B cell (primary cell): ENCODE measurements at regions of chr5 and their contacts with region 1.

Region 1: DNA sequence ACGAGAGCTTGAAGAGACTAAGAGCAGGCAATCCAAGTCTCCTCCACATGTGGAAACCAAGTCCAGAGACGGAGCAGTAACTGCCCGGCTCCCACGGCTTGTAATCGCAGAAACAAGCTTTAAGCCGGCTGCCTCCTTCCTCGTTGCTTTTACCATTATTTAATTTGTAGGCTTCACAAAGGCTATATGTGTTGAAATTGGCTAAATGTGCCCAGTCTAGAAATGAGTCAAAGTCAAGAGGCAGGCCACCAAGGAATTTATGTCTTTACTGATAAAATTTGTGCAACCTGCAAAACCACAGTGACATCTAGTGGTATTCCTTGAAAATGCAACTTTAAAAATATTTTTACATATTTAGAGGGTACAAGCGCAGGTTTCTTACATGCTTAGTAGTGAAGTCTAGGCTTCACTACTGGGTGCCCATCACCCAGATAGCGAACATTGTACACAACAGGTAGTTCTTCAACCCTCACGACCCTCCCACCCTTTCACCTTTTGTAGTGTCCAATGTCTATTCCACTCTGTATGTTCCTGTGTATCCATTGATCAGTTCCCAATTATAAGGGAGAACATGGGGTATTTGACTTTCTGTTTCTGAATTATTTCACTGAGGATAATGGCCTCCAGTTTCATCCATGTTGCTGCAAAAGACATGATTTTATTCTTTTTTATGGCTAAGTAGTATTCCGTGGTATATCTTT is 33.5 kb upstream of the EBF1 start:
- DNase-seq: peak; percentile 71
- ATAC-seq: peak; percentile 58
- H3K4me3 ChIP-seq: no peak overlapping the region
- H3K4me3 Mint-ChIP-seq: no peak overlapping the region
- H3K27ac ChIP-seq: no peak overlapping the region
- H3K27ac Mint-ChIP-seq: no peak overlapping the region
- H3K4me1 ChIP-seq: no peaks in the 10 kb centered on the region
- H3K4me1 Mint-ChIP-seq: no peaks in the 10 kb centered on the region
- H3K27me3 ChIP-seq: no peaks in the 10 kb centered on the region
- H3K27me3 Mint-ChIP-seq: peaks cover 13% of the 10 kb centered on the region
- CTCF ChIP-seq: peak; percentile 91

Region 2: DNA sequence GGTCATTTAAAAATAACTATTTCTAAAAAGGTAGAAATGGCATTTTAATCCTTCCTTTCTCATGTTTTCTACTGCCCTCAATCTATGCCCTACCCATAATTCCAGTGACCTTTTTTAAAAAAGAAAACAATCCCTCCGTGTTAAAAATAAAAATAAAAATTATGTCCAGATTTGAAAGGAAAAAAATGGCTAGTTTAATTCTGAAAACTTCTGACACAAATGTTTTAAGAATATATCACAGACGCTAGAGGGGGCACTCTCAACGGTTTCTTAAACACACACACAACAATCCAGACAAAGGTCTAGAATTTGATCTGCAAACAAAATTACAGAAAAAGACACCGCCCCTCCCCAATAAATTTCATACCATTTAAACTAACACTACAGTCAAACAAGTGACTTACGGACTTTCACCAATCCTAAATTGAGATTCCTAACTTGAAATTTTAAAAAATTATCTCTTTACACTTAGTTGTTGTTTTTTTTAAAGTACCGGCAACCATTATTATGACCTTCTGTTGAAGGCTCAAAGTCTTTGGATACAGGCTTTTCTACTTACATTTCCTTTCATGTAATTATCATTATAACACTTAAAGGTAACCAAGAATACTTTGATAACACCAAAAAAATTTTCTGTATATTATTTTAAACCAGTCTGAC is 1312.5 kb before region 1 on chr5:
- CTCF ChIA-PET with region 1: interaction called, 22 read pairs
- POLR2A ChIA-PET with region 1: no interaction called
- intact Hi-C with region 1: loop called (anchors 1 kb)
- DNase-seq: peak; percentile 53
- ATAC-seq: no peak
- H3K4me3 ChIP-seq: no peak overlapping the region
- H3K4me3 Mint-ChIP-seq: no peak overlapping the region
- H3K27ac ChIP-seq: peak overlapping the region in 1 of 2 donors; percentile 39
- H3K27ac Mint-ChIP-seq: peak overlapping the region; percentile 2
- H3K4me1 ChIP-seq: no peaks in the 10 kb centered on the region
- H3K4me1 Mint-ChIP-seq: peaks cover 24% of the 10 kb centered on the region
- H3K27me3 ChIP-seq: no peaks in the 10 kb centered on the region
- H3K27me3 Mint-ChIP-seq: no peaks in the 10 kb centered on the region
- CTCF ChIP-seq: peak; percentile 72

Region 3: GRCh38 chr5:157994906-157995519 is 1138.2 kb before region 1 on chr5:
- CTCF ChIA-PET with region 1: interaction called, 6 read pairs
- POLR2A ChIA-PET with region 1: no interaction called
- intact Hi-C with region 1: loop called (anchors 5 kb)
- DNase-seq: peak; percentile 57
- ATAC-seq: peak; percentile 69
- H3K4me3 ChIP-seq: no peak overlapping the region
- H3K4me3 Mint-ChIP-seq: no peak overlapping the region
- H3K27ac ChIP-seq: no peak overlapping the region
- H3K27ac Mint-ChIP-seq: no peak overlapping the region
- H3K4me1 ChIP-seq: peaks cover 0 to 3% of the 10 kb centered on the region in 2 donors
- H3K4me1 Mint-ChIP-seq: peaks cover 2% of the 10 kb centered on the region
- H3K27me3 ChIP-seq: peaks cover 0 to 4% (median 0%) of the 10 kb centered on the region in 4 experiments
- H3K27me3 Mint-ChIP-seq: peaks cover 5% of the 10 kb centered on the region
- CTCF ChIP-seq: peak; percentile 72

Region 4: GRCh38 chr5:158074992-158075769 is 1058.0 kb before region 1 on chr5:
- CTCF ChIA-PET with region 1: interaction called, 60 read pairs
- POLR2A ChIA-PET with region 1: no interaction called
- intact Hi-C with region 1: loop called (anchors 1 kb)
- DNase-seq: peak; percentile 78
- ATAC-seq: peak; percentile 90
- H3K4me3 ChIP-seq: peak overlapping the region in 2 of 5 experiments; percentile 10 to 20
- H3K4me3 Mint-ChIP-seq: peak overlapping the region; percentile 12
- H3K27ac ChIP-seq: no peak overlapping the region
- H3K27ac Mint-ChIP-seq: peak overlapping the region; percentile 43
- H3K4me1 ChIP-seq: peaks cover 12 to 20% of the 10 kb centered on the region in 2 donors
- H3K4me1 Mint-ChIP-seq: peaks cover 21% of the 10 kb centered on the region
- H3K27me3 ChIP-seq: peaks cover 0 to 3% (median 0%) of the 10 kb centered on the region in 4 experiments
- H3K27me3 Mint-ChIP-seq: no peaks in the 10 kb centered on the region
- CTCF ChIP-seq: peak; percentile 82

Region 5: GRCh38 chr5:158165638-158166037 is 967.6 kb before region 1 on chr5:
- CTCF ChIA-PET with region 1: interaction called, 15 read pairs
- POLR2A ChIA-PET with region 1: no interaction called
- intact Hi-C with region 1: no loop called
- DNase-seq: no peak
- ATAC-seq: no peak
- H3K4me3 ChIP-seq: no peak overlapping the region
- H3K4me3 Mint-ChIP-seq: no peak overlapping the region
- H3K27ac ChIP-seq: no peak overlapping the region
- H3K27ac Mint-ChIP-seq: no peak overlapping the region
- H3K4me1 ChIP-seq: peaks cover 9 to 10% of the 10 kb centered on the region in 2 donors
- H3K4me1 Mint-ChIP-seq: peaks cover 9% of the 10 kb centered on the region
- H3K27me3 ChIP-seq: peaks cover 0 to 3% (median 0%) of the 10 kb centered on the region in 4 experiments
- H3K27me3 Mint-ChIP-seq: peaks cover 14% of the 10 kb centered on the region
- CTCF ChIP-seq: no peak

Region 6: DNA sequence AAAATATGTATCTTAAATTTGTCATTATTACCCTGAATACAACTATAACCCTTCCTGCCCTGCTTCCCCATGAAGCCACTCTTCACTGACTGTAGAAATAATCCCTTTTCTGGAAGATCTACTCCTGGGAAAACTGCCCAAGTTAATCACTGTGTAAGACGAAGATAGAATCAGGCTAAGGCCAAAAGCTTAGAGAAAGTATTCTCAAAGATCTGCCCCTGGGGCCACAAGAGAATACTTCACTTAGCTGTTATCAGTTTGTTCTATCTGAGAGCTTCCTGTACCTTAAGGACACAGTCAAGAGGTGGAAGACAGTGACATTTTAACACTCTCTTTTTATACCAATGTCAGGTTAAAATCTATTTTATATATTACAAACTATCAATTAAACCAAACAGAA is 42.4 kb after region 1 on chr5:
- CTCF ChIA-PET with region 1: no interaction called
- POLR2A ChIA-PET with region 1: no interaction called
- intact Hi-C with region 1: no loop called
- DNase-seq: no peak
- ATAC-seq: no peak
- H3K4me3 ChIP-seq: no peak overlapping the region
- H3K4me3 Mint-ChIP-seq: no peak overlapping the region
- H3K27ac ChIP-seq: no peak overlapping the region
- H3K27ac Mint-ChIP-seq: no peak overlapping the region
- H3K4me1 ChIP-seq: peaks cover 7 to 28% of the 10 kb centered on the region in 2 donors
- H3K4me1 Mint-ChIP-seq: peaks cover 29% of the 10 kb centered on the region
- H3K27me3 ChIP-seq: no peaks in the 10 kb centered on the region
- H3K27me3 Mint-ChIP-seq: no peaks in the 10 kb centered on the region
- CTCF ChIP-seq: no peak

Region 7: DNA sequence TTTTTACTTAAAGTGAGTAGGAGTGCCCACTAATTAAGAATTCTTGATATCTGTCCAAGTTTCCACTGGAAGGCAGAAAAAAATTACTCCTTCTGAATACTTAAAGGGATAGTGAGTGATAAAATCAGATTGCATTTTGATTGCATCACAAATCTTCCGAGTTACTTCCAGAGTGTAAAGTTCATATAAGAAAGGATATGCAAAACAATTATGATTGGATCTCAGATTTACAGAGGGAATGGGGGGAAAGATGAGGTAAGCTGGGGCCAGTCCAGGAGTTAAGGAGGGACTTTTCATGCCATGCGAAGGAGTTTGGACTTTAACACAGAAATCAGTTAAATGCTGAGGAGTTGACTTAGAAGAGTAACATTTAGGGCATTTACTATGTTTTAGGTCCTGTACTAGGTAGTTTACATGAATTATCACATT is 85.4 kb after region 1 on chr5:
- CTCF ChIA-PET with region 1: no interaction called
- POLR2A ChIA-PET with region 1: no interaction called
- intact Hi-C with region 1: no loop called
- DNase-seq: no peak
- ATAC-seq: no peak
- H3K4me3 ChIP-seq: no peak overlapping the region
- H3K4me3 Mint-ChIP-seq: no peak overlapping the region
- H3K27ac ChIP-seq: no peak overlapping the region
- H3K27ac Mint-ChIP-seq: no peak overlapping the region
- H3K4me1 ChIP-seq: no peaks in the 10 kb centered on the region
- H3K4me1 Mint-ChIP-seq: no peaks in the 10 kb centered on the region
- H3K27me3 ChIP-seq: no peaks in the 10 kb centered on the region
- H3K27me3 Mint-ChIP-seq: no peaks in the 10 kb centered on the region
- CTCF ChIP-seq: no peak

Region 8: DNA sequence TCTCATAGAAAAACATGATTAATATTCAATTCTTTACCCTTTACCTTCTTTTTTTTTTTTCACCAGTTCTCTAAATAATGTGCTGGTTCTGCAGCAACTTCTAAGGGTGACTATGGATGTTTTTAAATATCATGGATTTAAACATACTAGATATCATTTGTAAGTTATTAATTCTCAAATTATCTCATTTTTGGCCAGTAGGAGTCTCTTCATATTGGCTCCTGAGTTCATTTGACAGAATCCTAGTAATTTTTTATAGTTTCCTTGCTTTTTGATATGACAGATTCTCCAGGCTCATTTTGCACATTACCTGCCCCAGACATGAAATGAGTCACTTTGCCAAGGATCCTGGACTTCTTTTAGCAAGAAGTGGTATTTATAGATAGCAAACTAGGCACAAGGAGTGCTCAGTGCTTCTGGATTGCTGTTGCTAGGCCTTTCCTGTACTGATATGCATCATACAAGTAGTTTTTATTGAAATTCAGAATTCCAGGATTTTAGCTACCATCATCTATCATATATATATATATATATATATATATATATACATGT is 398.4 kb after region 1 on chr5:
- CTCF ChIA-PET with region 1: no interaction called
- POLR2A ChIA-PET with region 1: no interaction called
- intact Hi-C with region 1: no loop called
- DNase-seq: no peak
- ATAC-seq: no peak
- H3K4me3 ChIP-seq: no peak overlapping the region
- H3K4me3 Mint-ChIP-seq: no peak overlapping the region
- H3K27ac ChIP-seq: no peak overlapping the region
- H3K27ac Mint-ChIP-seq: no peak overlapping the region
- H3K4me1 ChIP-seq: no peaks in the 10 kb centered on the region
- H3K4me1 Mint-ChIP-seq: no peaks in the 10 kb centered on the region
- H3K27me3 ChIP-seq: no peaks in the 10 kb centered on the region
- H3K27me3 Mint-ChIP-seq: no peaks in the 10 kb centered on the region
- CTCF ChIP-seq: no peak